ENCODE measurements at regions of chr12 and their contacts with region 1.

Region 1: GRCh38 chr12:52865090-52865944 is 16.5 kb upstream of the KRT78 start:
- DNase-seq: peak; percentile 75
- H3K4me3 ChIP-seq: no peak overlapping the region
- H3K27ac ChIP-seq: no peak overlapping the region
- H3K4me1 ChIP-seq: no peaks in the 10 kb centered on the region
- H3K27me3 ChIP-seq: no peaks in the 10 kb centered on the region
- CTCF ChIP-seq: peak; percentile 85 to 91
- POLR2A ChIP-seq: no peak

Region 2: GRCh38 chr12:52156736-52157565 is 708.4 kb before region 1 on chr12:
- CTCF ChIA-PET with region 1: interaction called, 16 read pairs
- POLR2A ChIA-PET with region 1: no interaction called
- dilution Hi-C with region 1: no loop called
- intact Hi-C with region 1: loop called (anchors 1 kb)
- DNase-seq: peak; percentile 58
- H3K4me3 ChIP-seq: no peak overlapping the region
- H3K27ac ChIP-seq: no peak overlapping the region
- H3K4me1 ChIP-seq: peaks cover 2% of the 10 kb centered on the region
- H3K27me3 ChIP-seq: no peaks in the 10 kb centered on the region
- CTCF ChIP-seq: peak; percentile 93 to 94
- POLR2A ChIP-seq: no peak

Region 3: GRCh38 chr12:52372216-52373154 is 492.8 kb before region 1 on chr12:
- CTCF ChIA-PET with region 1: interaction called, 72 read pairs
- POLR2A ChIA-PET with region 1: no interaction called
- dilution Hi-C with region 1: no loop called
- intact Hi-C with region 1: no loop called
- DNase-seq: peak; percentile 73
- H3K4me3 ChIP-seq: no peak overlapping the region
- H3K27ac ChIP-seq: no peak overlapping the region
- H3K4me1 ChIP-seq: no peaks in the 10 kb centered on the region
- H3K27me3 ChIP-seq: peaks cover 13 to 19% of the 10 kb centered on the region in 2 experiments
- CTCF ChIP-seq: peak; percentile 69 to 77
- POLR2A ChIP-seq: no peak

Region 4: DNA sequence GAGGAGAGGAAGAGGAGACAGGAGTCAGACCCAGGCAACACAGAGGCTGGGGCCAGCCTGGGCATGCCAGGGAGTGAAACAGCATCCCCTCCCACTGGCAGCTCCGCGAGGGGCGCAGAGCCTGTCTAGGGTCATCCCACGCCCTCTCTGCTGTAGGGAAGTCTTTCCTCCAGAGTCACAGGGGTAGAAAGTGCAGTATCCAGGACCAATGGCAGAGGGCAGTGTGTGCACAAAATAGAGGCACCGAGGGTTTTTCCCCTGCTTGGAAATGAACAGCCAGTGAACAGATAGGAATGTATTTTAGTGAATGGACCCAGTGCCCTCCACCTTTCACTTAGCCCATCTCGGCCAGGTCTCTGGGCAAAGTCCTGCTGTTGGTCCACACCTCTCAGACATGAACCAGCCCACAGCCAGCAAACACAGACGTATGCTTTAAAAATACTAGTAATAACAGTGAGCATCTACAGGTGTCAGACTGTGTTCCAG is 282.3 kb before region 1 on chr12:
- CTCF ChIA-PET with region 1: interaction called, 120 read pairs
- POLR2A ChIA-PET with region 1: no interaction called
- dilution Hi-C with region 1: no loop called
- intact Hi-C with region 1: loop called (anchors 1 kb)
- DNase-seq: peak; percentile 53
- H3K4me3 ChIP-seq: no peak overlapping the region
- H3K27ac ChIP-seq: no peak overlapping the region
- H3K4me1 ChIP-seq: no peaks in the 10 kb centered on the region
- H3K27me3 ChIP-seq: peaks cover 2% of the 10 kb centered on the region in 2 experiments
- CTCF ChIP-seq: peak; percentile 49 to 66
- POLR2A ChIP-seq: no peak

Region 5: DNA sequence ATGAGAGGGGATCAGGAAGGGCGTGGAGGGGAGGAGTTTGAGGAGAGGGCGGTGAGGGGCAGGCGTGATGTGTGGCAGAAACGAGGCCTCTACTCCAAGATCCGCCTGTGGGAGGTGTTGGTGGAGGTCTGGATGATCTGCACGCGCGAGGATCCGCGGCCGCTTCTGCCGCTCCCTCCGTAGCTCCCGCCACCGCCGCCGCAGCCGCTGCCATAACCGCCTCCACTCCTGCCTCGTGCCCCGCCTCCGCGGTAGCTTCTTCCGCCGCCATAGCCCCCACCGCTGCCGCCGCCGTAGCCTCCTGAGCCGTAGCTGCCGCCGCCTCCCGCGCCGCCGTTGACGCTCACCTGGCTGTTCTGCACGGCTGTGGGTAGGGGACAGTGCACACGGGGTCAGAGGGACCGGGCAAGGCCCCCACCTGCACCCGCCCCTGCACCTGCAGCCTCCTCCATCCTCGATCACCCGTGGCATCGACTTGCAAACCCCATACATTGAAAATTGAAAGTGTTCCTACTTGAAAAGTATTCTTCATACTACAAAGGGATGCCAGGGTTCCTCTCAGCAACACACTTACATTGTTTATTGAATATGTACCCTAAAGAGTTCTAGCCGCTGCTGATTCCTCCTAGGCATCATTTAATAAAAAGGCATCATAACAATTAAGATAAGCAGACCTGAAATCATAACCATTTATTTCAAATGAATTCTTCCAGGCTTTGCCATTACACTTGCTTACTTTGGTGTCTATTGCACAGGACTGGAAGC is 174.1 kb before region 1 on chr12:
- CTCF ChIA-PET with region 1: interaction called, 9 read pairs
- POLR2A ChIA-PET with region 1: no interaction called
- dilution Hi-C with region 1: no loop called
- intact Hi-C with region 1: loop called (anchors 10 kb)
- DNase-seq: no peak
- H3K4me3 ChIP-seq: no peak overlapping the region
- H3K27ac ChIP-seq: no peak overlapping the region
- H3K4me1 ChIP-seq: no peaks in the 10 kb centered on the region
- H3K27me3 ChIP-seq: peaks cover 25 to 40% of the 10 kb centered on the region in 2 experiments
- CTCF ChIP-seq: no peak
- POLR2A ChIP-seq: no peak

Region 6: DNA sequence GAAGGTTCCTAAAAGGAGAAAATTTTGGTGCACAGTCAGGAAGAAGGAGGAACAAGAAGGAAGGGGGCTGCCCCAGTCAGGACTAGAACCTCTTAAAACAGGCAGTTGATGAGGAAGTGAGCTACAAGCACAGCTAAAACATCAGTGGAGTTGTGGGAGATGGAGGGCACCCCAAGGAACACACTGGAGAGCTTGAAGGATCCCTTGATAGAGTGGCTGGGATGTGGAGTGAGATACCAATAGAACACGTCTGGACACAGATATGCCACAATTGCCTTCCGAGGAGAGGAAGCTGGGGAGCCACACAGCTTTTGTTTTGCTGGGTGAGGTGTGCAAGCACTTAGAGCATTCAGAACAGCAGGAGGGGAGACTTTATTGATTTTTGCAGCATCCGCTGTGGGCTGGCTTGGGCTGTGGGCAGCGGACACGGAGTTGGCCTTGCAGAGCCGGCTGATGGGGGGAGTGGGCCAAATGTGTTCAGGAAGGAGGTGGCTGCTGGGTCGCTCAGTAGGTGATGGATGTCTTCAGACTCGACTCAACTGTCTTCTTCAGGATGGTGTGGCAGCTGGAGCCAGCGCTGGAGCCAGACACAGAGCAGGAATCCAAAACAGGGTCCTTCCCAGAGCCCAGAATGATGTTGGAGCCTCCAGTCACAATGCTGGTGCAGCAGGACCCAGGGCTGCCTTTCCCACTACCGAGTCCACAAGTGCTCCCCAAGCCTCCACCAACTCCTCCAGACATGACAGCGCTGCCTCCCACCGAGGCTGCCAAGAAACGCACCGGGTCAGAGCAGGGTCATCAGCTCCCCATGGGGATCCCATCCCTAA is 26.5 kb before region 1 on chr12:
- CTCF ChIA-PET with region 1: interaction called, 10 read pairs
- POLR2A ChIA-PET with region 1: no interaction called
- dilution Hi-C with region 1: no loop called
- intact Hi-C with region 1: no loop called
- DNase-seq: no peak
- H3K4me3 ChIP-seq: no peak overlapping the region
- H3K27ac ChIP-seq: no peak overlapping the region
- H3K4me1 ChIP-seq: peaks cover 4% of the 10 kb centered on the region
- H3K27me3 ChIP-seq: no peaks in the 10 kb centered on the region
- CTCF ChIP-seq: no peak
- POLR2A ChIP-seq: no peak

Region 7: GRCh38 chr12:53133722-53134121 is 268.4 kb after region 1 on chr12:
- CTCF ChIA-PET with region 1: no interaction called
- POLR2A ChIA-PET with region 1: no interaction called
- dilution Hi-C with region 1: no loop called
- intact Hi-C with region 1: no loop called
- DNase-seq: no peak
- H3K4me3 ChIP-seq: no peak overlapping the region
- H3K27ac ChIP-seq: no peak overlapping the region
- H3K4me1 ChIP-seq: no peaks in the 10 kb centered on the region
- H3K27me3 ChIP-seq: peaks cover 3 to 5% of the 10 kb centered on the region in 2 experiments
- CTCF ChIP-seq: no peak
- POLR2A ChIP-seq: no peak